Activated CD8-positive, alpha-beta T cell treated with anti-CD3 and anti-CD28 coated beads, Interleukin-2, amount 10 ng/mL, durations not matched to agents 7 days and 5 days (primary cell): ENCODE measurements at regions of chr6 and their contacts with region 1.

Region 1: GRCh38 chr6:79949233-79949632 is 1.9 kb upstream of the ELOVL4 start:
- DNase-seq: peak; percentile 83
- ATAC-seq: peak; percentile 42
- H3K4me3 Mint-ChIP-seq: no peak overlapping the region
- H3K27ac Mint-ChIP-seq: no peak overlapping the region
- H3K4me1 Mint-ChIP-seq: peaks cover 22% of the 10 kb centered on the region
- H3K27me3 Mint-ChIP-seq: peaks cover 26% of the 10 kb centered on the region

Region 2: GRCh38 chr6:79964607-79965081 is 15.4 kb after region 1 on chr6:
- CTCF ChIA-PET with region 1: interaction called, 14 read pairs
- POLR2A ChIA-PET with region 1: interaction called, 3 read pairs
- DNase-seq: no peak
- ATAC-seq: peak; percentile 69
- H3K4me3 Mint-ChIP-seq: no peak overlapping the region
- H3K27ac Mint-ChIP-seq: no peak overlapping the region
- H3K4me1 Mint-ChIP-seq: peaks cover 11% of the 10 kb centered on the region
- H3K27me3 Mint-ChIP-seq: peaks cover 25% of the 10 kb centered on the region

Region 3: DNA sequence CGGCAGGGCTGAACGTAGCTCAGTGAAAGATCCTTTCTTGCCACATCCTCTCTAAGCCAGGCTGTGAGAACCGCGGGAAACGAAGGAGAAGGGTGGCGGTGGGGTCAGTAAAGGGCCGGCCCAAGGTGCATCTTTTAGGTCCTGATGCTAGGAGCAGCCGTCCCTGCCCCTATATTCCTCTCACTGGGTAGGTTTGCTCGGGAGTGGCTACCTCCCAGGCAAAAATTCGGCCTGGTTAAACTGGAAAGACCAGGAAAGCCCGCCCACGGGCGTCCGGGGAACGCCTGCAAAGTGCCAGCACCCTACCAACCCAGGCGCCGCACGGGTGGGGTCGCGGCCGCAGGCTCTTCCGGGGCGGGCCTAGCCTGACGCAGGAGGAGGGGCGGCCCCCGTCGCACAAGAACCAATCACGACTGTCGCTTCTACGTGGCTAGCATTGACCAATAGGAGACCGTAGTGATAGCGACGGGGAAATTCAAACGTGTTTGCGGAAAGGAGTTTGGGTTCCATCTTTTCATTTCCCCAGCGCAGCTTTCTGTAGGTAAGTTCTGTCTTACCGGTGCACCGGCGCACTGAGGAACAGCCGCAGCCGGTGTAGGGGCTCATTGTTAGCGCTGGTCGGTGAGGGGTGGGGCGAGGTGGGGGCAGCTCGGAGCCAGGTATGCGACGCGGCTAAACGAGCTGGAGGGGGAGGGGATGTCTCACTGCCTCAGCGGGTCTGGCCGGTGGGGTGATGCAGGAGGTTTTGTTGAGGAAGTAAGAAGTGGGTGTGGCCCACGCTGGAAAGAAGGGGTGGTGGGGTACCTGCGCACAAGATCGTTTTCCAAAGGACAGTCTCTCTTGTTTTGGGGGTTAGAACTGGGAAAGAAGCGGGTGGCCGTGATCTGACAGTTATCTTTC is 55.2 kb after region 1 on chr6 and contains the start of gene TTK:
- CTCF ChIA-PET with region 1: interaction called, 108 read pairs
- POLR2A ChIA-PET with region 1: interaction called, 14 read pairs
- DNase-seq: peak; percentile 95
- ATAC-seq: peak; percentile 98
- H3K4me3 Mint-ChIP-seq: peak within 1 kb of the TSS; percentile 92
- H3K27ac Mint-ChIP-seq: peak within 1 kb of the TSS; percentile 99
- H3K4me1 Mint-ChIP-seq: peaks cover 44% of the 10 kb centered on the region
- H3K27me3 Mint-ChIP-seq: peaks cover 3% of the 10 kb centered on the region
- total RNA-seq, gene TTK: 40.9 to 47.8 TPM

Region 4: GRCh38 chr6:80029470-80029869 is 80.2 kb after region 1 on chr6:
- CTCF ChIA-PET with region 1: interaction called, 19 read pairs
- POLR2A ChIA-PET with region 1: no interaction called
- DNase-seq: no peak
- ATAC-seq: no peak
- H3K4me3 Mint-ChIP-seq: no peak overlapping the region
- H3K27ac Mint-ChIP-seq: no peak overlapping the region
- H3K4me1 Mint-ChIP-seq: no peaks in the 10 kb centered on the region
- H3K27me3 Mint-ChIP-seq: no peaks in the 10 kb centered on the region

Region 5: DNA sequence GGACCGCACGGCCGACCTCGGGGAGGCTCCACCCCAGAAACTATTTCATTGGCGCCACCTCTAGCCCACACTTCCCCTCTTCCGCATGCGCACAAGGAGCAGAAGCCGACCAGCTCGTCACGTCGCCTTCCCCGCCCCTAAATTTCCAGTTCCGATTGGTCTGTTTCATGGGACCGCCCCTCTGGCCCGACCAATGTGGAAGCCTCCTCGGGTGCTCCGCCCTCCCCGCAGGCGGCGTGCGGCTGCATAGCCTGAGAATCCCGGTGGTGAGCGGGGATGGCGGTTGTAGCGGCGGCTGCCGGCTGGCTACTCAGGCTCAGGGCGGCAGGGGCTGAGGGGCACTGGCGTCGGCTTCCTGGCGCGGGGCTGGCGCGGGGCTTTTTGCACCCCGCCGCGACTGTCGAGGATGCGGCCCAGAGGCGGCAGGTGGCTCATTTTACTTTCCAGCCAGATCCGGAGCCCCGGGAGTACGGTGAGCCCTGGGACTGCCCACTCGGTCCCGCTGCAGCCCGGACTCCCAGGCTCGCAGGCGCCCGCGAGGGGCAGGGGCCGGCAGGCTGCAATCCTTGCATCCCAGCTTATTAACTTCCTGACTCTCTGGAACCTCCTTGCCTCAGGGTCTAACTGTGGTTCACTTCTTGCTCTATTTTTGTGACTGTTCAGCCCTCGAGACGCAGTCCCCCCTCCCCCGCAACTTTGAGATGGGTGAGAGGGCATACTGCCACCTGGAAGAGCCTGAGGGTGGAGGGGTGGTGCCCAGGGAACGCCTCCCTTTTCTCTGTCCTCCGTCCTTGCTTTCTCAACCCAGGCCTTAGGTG is 157.4 kb after region 1 on chr6 and contains the start of gene BCKDHB:
- CTCF ChIA-PET with region 1: interaction called, 32 read pairs
- POLR2A ChIA-PET with region 1: interaction called, 3 read pairs
- DNase-seq: peak; percentile 99
- ATAC-seq: peak; percentile 99
- H3K4me3 Mint-ChIP-seq: peak within 1 kb of the TSS; percentile 91
- H3K27ac Mint-ChIP-seq: peak within 1 kb of the TSS; percentile 88
- H3K4me1 Mint-ChIP-seq: peaks cover 18% of the 10 kb centered on the region
- H3K27me3 Mint-ChIP-seq: peaks cover 15% of the 10 kb centered on the region
- total RNA-seq, gene BCKDHB: 19.9 to 21.9 TPM